Natural killer cell (primary cell): ENCODE measurements at regions of chr18 and their contacts with region 1.

Region 1: GRCh38 chr18:79200546-79201268 is 131.5 kb downstream of the ATP9B start:
- DNase-seq: peak in 1 of 2 donors; percentile 32
- ATAC-seq: peak; percentile 49 to 68 (median 50)
- H3K4me3 ChIP-seq: no peak overlapping the region
- H3K4me3 Mint-ChIP-seq: peak overlapping the region; percentile 65
- H3K27ac ChIP-seq: no peak overlapping the region
- H3K27ac Mint-ChIP-seq: peak overlapping the region; percentile 84 to 88
- H3K4me1 ChIP-seq: peaks cover 20% of the 10 kb centered on the region
- H3K4me1 Mint-ChIP-seq: peaks cover 33 to 36% of the 10 kb centered on the region in 2 donors
- H3K27me3 ChIP-seq: no peaks in the 10 kb centered on the region
- H3K27me3 Mint-ChIP-seq: no peaks in the 10 kb centered on the region
- CTCF ChIP-seq: no peak

Region 2: DNA sequence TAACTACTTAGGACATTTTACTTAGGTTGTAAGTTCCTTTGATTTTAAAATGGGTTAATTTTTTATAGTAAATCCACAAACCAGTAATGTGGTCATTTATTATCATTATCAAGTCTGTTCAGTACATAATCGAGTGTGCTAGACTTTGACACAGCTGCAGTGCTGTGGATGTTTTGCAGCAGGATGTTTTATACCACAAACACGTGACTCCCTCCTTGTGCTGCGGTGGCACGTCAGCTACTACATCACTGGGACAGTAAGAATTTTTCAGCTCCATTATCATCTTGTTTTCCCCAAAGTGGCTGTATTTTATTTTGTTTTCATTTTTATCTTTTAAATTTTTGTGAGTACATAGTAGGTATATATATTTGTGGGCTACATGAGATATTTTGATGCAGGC is 61.5 kb before region 1 on chr18:
- intact Hi-C with region 1: loop called (anchors 1 kb)
- DNase-seq: peak; percentile 47 to 70
- ATAC-seq: peak; percentile 95 to 99 (median 97)
- H3K4me3 ChIP-seq: no peak overlapping the region
- H3K4me3 Mint-ChIP-seq: no peak overlapping the region
- H3K27ac ChIP-seq: no peak overlapping the region
- H3K27ac Mint-ChIP-seq: peak overlapping the region; percentile 83 to 84
- H3K4me1 ChIP-seq: peaks cover 2% of the 10 kb centered on the region
- H3K4me1 Mint-ChIP-seq: peaks cover 10 to 20% of the 10 kb centered on the region in 2 donors
- H3K27me3 ChIP-seq: no peaks in the 10 kb centered on the region
- H3K27me3 Mint-ChIP-seq: no peaks in the 10 kb centered on the region
- CTCF ChIP-seq: no peak

Region 3: DNA sequence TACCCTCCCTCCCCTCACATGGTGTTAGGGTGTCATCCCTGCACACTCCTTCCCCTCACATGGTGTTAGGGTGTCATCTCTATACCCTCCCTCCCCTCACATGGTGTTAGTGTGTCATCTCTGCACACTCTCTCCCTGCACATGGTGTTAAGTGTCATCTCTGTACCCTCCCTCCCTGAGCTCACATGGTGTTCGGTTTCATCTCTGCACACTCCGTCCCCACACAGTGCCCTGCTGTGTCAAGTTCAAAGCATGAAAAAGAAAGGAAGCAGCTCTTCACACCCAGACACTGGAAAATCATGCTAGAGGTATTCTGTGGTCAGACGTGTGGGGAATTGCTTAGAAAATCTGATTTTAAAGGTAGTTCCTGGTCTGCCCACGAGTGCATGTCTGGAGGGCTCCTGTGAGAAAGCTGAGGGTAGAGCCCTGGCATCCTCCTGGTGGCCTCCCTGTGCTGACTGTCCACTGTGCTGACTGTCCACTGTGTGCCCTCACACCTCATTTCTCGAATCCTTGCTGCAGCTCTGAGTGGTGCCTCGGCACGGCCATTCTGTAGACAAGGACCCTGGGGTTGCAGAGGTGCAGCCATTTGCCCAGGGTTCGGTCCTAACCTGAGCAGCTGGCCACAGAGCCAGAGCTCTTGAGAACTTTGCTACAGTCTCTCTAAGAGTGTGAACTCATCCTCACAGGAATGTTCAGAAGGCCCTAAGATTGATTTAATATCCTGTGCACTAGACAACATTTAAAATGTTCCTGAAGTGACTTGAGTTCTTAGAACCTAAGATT is 125.9 kb after region 1 on chr18:
- intact Hi-C with region 1: loop called (anchors 5 kb)
- DNase-seq: peak; percentile 35 to 51
- ATAC-seq: peak; percentile 83 to 89 (median 87)
- H3K4me3 ChIP-seq: no peak overlapping the region
- H3K4me3 Mint-ChIP-seq: peak overlapping the region; percentile 82
- H3K27ac ChIP-seq: peak overlapping the region; percentile 53
- H3K27ac Mint-ChIP-seq: peak overlapping the region; percentile 88 to 89
- H3K4me1 ChIP-seq: peaks cover 26% of the 10 kb centered on the region
- H3K4me1 Mint-ChIP-seq: peaks cover 12 to 22% of the 10 kb centered on the region in 2 donors
- H3K27me3 ChIP-seq: no peaks in the 10 kb centered on the region
- H3K27me3 Mint-ChIP-seq: no peaks in the 10 kb centered on the region
- CTCF ChIP-seq: no peak